Gastrocnemius medialis (tissue), 4 donors: ENCODE measurements at regions of chr21 and their contacts with region 1.

Region 1: DNA sequence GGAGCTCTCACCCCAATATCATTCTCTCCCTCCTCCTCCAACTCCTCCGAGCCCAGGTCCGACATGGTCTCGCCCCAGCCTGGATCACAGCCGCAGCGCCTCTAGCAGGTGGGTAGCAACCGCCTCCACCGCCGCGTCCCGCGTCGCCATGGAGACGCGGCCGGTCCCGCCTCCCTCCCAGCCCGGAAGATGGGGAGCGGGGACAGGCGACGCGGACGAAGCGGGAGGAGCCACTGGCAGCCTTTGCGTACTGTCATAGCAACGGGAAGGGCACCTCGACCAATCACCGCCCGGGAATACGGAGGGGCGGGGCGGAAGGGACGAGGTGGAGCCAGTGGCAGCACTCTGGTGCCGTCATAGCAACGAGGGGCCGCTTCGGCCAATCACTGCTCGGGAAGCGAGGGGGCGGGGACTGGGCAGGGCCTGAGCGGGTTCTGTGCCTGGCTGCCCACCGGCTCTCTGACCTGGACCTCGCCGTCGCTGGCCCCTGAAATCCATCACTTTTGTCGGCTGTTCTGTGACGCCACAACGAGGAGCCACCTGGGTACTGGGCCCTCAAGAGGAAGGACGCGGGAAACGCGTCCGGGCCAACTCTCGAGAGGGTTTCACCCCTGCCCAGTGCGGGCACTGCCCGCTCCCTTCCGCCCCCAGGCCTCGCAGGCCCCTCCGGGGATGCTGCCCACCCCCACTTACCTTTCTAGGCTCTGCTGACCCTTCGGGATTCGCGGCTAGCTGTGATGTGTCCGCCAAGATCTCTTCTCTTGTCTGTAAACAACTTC is at the start of gene RSPH1:
- DNase-seq: peak; percentile 99
- ATAC-seq: peak; percentile 99
- H3K4me3 ChIP-seq: peak within 1 kb of the TSS; percentile 66 to 83 (median 76)
- H3K27ac ChIP-seq: peak within 1 kb of the TSS; percentile 83 to 86 (median 85)
- H3K4me1 ChIP-seq: peaks cover 0 to 5% of the 10 kb centered on the region in 2 donors
- H3K27me3 ChIP-seq: no peaks in the 10 kb centered on the region
- CTCF ChIP-seq: no peak
- POLR2A ChIP-seq: peak; percentile 67 to 81
- total RNA-seq, gene RSPH1: 0.29 TPM in 1 of 4 donors, not detected in the others

Region 2: DNA sequence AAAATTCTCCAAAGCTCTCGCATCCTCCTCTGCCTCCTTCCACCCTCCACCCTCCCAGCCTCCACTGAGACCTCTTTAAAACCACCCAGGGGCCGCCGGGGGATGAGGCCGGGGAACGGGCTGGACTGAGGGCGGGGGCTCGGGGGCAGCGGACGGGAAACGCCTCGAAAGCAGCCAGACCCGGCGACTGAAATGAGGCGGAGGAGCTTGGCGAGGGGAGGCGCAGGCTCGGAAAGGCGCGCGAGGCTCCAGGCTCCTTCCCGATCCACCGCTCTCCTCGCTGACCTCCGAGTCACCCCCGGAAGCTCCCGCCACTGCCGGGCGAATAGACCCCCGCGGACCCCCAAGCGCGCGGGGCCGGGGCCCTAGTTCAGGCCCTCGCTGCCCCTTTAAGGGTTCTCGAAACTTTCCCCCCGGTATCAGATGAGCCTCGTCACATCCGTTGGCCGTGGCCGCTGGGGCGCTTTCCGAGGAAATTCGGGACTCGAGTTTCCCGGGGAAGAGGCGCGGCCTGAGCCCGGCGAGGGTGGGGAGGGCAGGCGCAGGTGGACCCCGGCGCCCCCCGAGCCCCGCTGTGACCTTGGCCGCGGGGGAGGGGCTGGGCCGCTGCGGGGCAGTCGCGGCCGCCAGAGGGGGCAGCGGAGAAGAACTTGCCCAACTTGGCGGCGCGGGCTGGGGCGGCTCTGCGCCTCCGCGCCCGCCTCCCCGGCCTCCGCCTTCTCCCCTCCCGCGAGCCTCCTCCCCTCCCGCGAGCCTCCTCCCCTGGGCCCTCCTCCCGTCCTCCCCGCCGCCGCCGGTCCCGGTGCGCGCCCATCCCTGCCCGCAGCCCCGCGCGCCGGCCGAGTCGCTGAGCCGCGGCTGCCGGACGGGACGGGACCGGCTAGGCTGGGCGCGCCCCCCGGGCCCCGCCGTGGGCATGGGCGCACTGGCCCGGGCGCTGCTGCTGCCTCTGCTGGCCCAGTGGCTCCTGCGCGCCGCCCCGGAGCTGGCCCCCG is 1328.7 kb before region 1 on chr21 and contains the start of gene BACE2:
- in situ Hi-C with region 1: no loop called
- intact Hi-C with region 1: loop called (anchors 5 kb)
- DNase-seq: peak; percentile 52 to 59
- ATAC-seq: peak; percentile 64 to 68
- H3K4me3 ChIP-seq: peak within 1 kb of the TSS; percentile 73 to 88 (median 84)
- H3K27ac ChIP-seq: peak within 1 kb of the TSS; percentile 85 to 89 (median 86)
- H3K4me1 ChIP-seq: peaks cover 17 to 18% of the 10 kb centered on the region in 2 donors
- H3K27me3 ChIP-seq: no peaks in the 10 kb centered on the region
- CTCF ChIP-seq: peak in 4 of 5 experiments; percentile 38 to 76 (median 66)
- POLR2A ChIP-seq: peak; percentile 54 to 66
- total RNA-seq, gene BACE2: 7.5 to 17.5 (median 9.3) TPM

Region 3: GRCh38 chr21:42440187-42440792 is 56.0 kb before region 1 on chr21:
- in situ Hi-C with region 1: no loop called
- intact Hi-C with region 1: no loop called
- DNase-seq: no peak
- ATAC-seq: no peak
- H3K4me3 ChIP-seq: no peak overlapping the region
- H3K27ac ChIP-seq: no peak overlapping the region
- H3K4me1 ChIP-seq: no peaks in the 10 kb centered on the region
- H3K27me3 ChIP-seq: peaks cover 0 to 3% (median 2%) of the 10 kb centered on the region in 3 donors
- CTCF ChIP-seq: no peak
- POLR2A ChIP-seq: no peak

Region 4: GRCh38 chr21:42513985-42514882 is 17.9 kb after region 1 on chr21:
- in situ Hi-C with region 1: no loop called
- intact Hi-C with region 1: loop called (anchors 2 kb)
- DNase-seq: peak in 1 of 2 donors; percentile 45
- ATAC-seq: peak; percentile 50 to 61
- H3K4me3 ChIP-seq: peak overlapping the region; percentile 59 to 91 (median 78)
- H3K27ac ChIP-seq: peak overlapping the region; percentile 79 to 89 (median 82)
- H3K4me1 ChIP-seq: peaks cover 10 to 13% of the 10 kb centered on the region in 2 donors
- H3K27me3 ChIP-seq: no peaks in the 10 kb centered on the region
- CTCF ChIP-seq: no peak
- POLR2A ChIP-seq: peak; percentile 44 to 53

Region 5: DNA sequence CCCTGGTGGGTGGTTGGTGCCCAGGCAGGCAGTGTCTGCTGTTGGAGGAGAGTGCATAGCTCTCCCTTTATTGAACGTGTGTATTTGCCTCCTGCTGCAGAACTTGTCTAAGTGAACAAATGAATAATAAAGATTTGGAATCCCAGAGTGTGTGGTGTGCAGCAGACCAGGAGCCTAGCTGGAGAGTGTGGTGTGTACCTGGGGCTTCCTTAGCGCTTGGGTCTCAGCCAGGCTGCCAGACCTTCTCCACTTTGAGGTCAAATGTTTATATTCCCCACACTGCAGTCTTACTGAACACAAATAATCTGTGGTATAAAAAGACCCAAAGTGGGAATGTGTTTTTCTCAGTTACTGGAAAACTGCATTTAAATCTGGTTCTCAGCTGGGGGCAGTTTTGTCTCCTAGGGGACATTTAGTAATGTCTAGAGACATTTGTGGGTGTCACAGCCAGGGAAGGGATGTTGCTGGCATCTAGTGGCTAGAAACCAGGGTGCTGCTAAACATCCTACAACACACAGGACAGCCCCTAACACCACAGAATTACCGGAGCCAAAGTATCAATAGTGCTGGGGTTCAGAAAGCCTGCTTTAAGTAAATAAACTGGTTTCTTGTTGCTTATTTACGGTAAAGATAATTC is 40.9 kb after region 1 on chr21:
- in situ Hi-C with region 1: no loop called
- intact Hi-C with region 1: loop called (anchors 2 kb)
- DNase-seq: no peak
- ATAC-seq: no peak
- H3K4me3 ChIP-seq: no peak overlapping the region
- H3K27ac ChIP-seq: peak overlapping the region in 1 of 4 donors; percentile 2
- H3K4me1 ChIP-seq: peaks cover 18 to 28% of the 10 kb centered on the region in 2 donors
- H3K27me3 ChIP-seq: no peaks in the 10 kb centered on the region
- CTCF ChIP-seq: peak in 4 of 5 experiments; percentile 32 to 49 (median 36)
- POLR2A ChIP-seq: no peak